Heart left ventricle (tissue), 16 donors: ENCODE measurements at regions of chr16 and their contacts with region 1.

Region 1: DNA sequence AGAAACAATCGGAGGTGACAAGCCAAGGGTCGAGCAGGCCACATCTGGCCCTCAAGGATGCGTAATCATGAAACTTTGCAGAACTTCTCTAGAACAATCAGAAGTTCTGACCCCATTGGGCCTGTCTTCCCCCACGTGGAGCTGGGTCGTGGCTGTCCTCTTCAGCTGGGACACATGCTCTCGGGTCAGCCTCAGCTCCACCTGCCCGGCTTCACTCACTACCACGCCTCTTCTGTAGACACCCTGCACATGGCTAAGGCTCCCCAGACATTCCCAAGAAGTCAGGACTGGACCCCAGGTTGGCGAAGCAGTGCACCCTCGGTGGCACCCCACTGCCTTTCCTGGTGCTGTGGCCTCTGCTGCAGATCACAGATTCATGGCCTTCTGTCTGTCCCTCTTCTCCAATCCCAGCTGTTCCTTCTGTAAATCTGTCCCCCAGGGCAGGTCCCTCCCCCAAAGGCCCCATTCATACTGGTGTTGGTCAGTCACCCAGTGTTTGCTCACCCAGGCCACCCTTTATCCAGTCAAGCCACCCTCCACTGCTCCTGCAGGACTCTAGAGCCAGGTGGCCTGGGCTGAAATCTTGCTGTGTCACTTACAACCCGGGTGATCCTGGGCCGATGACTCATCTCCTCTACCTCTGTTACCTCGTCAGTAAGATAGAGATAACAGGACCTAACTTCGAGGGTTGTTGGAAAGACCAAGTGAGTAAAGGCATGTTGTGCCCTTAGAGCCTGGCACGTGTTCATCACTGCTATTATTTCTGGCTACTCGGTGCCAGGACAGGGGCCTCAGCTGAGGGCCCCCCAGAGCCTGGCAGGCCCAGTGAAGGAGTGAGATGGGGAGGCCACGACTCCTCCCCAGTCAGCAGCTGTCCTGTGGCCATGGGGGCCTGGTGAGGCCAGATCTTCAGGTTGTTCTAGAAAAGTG is 1.4 kb upstream of the SLC5A11 start:
- DNase-seq: no peak
- ATAC-seq: peak in 2 of 4 donors; percentile 34 to 50
- H3K4me3 ChIP-seq: no peak overlapping the region
- H3K27ac ChIP-seq: no peak overlapping the region
- H3K4me1 ChIP-seq: peaks cover 0 to 2% (median 0%) of the 10 kb centered on the region in 12 donors
- H3K27me3 ChIP-seq: no peaks in the 10 kb centered on the region
- CTCF ChIP-seq: no peak
- POLR2A ChIP-seq: no peak

Region 2: DNA sequence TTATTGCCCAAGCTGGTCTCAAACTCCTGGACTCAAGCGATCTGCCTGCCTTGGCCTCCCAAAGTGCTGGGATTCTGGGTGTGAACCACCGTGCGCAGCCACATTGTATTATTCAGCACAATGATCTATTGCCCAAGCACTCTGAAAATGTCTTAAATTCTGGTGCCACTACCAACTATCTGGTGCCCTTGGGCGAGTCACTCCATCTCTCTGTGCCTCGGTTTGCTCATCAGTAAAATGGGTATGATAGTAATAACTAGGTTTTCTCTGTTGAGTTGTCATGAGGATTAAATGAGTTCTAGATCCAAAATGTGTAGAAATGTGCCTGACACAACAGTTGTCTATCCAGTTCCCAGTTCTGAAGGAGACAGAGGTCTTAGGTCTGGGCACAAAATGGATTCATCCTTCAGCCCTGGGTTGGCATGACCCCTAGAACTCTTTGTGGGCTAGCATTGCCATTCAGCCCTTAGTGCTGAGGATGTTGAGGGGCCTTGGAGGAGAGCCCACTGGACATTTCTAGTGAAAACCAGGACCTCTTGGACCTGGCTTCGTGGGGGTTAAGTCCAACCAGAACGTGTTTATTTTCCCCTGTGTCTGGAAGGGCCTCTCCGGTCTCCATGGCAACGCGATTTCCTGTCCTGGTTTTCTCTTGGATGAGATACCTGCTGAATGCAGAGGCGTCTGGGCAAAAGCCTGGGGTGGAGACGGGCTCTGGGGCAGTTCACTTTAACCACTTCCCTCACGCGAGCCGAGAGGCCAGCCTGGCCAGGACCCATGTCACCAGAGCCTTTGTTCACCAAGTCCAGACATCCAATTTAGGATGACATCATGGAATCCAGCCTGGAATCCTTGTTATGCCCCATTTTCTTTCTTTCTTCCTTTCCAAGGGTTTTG is 158.6 kb before region 1 on chr16:
- intact Hi-C with region 1: no loop called
- DNase-seq: peak; percentile 56 to 78 (median 68)
- ATAC-seq: peak in 3 of 4 donors; percentile 67 to 74 (median 74)
- H3K4me3 ChIP-seq: peak overlapping the region in 2 of 12 donors; percentile 5 to 33
- H3K27ac ChIP-seq: peak overlapping the region in 6 of 12 donors; percentile 35 to 82 (median 55)
- H3K4me1 ChIP-seq: peaks cover 0 to 15% (median 2%) of the 10 kb centered on the region in 12 donors
- H3K27me3 ChIP-seq: no peaks in the 10 kb centered on the region
- CTCF ChIP-seq: no peak
- POLR2A ChIP-seq: no peak

Region 3: DNA sequence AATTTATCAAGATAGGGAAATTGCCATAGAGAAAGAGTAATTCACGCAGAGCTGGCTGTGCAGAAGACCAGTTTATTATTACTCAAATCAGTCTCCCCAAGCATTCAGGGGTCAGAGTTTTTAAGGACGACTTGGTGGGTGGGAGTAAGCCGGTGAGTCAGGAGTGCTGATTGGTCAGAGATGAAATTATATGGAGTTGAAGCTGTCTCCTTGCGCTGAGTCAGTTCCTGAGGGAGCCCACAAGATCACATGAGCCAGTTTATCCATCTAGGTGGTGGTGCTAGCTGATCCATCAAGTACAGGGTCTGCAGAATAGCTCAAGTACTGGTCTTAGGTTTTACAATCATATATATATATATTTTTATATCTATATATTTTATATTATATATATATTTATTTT is 366.4 kb after region 1 on chr16:
- intact Hi-C with region 1: loop called in 1 of 10 experiments (anchors 10 kb)
- DNase-seq: no peak
- ATAC-seq: no peak
- H3K4me3 ChIP-seq: no peak overlapping the region
- H3K27ac ChIP-seq: no peak overlapping the region
- H3K4me1 ChIP-seq: peaks cover 0 to 2% (median 0%) of the 10 kb centered on the region in 12 donors
- H3K27me3 ChIP-seq: no peaks in the 10 kb centered on the region
- CTCF ChIP-seq: no peak
- POLR2A ChIP-seq: no peak